ENCODE measurements at regions of chr10 and their contacts with region 1.

Region 1: DNA sequence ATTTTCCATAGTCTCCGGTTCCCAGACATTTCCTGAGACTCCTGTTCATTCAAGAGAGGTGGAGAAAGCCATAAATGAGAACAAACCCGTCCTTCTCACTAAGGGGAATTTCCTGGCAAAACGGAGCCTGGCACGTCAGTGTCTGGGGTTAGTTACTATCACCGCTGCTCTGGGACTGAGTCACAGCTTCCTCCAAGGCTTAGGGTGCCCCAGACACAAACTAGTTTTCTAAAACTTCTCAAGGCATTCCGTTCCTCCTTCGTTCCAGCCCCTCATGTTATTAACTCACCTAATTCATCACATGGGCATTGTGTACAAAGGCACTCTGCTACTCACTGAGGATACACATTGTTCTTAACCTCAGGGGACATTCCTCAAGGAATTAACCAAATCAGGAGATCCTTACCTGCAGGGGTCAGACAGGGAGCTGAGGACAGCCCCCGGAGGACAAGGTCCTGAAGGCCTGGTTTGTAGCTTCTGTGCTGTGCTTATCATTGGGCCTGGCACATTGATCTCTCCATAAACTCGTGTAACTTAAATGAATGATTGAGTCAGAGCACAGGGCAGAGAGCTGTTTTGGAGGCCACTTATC is 103.0 kb upstream of the KLF6 start:
- DNase-seq: peak; percentile 70 to 94 (median 74)
- H3K4me3 ChIP-seq: no peak overlapping the region
- H3K4me3 Mint-ChIP-seq: peak overlapping the region; percentile 62 to 82 (median 70)
- H3K27ac ChIP-seq: peak overlapping the region; percentile 77
- H3K27ac Mint-ChIP-seq: peak overlapping the region; percentile 91 to 99 (median 98)
- H3K4me1 ChIP-seq: peaks cover 53% of the 10 kb centered on the region
- H3K4me1 Mint-ChIP-seq: peaks cover 23 to 68% (median 49%) of the 10 kb centered on the region in 4 donors
- H3K27me3 ChIP-seq: no peaks in the 10 kb centered on the region
- H3K27me3 Mint-ChIP-seq: no peaks in the 10 kb centered on the region

Region 2: DNA sequence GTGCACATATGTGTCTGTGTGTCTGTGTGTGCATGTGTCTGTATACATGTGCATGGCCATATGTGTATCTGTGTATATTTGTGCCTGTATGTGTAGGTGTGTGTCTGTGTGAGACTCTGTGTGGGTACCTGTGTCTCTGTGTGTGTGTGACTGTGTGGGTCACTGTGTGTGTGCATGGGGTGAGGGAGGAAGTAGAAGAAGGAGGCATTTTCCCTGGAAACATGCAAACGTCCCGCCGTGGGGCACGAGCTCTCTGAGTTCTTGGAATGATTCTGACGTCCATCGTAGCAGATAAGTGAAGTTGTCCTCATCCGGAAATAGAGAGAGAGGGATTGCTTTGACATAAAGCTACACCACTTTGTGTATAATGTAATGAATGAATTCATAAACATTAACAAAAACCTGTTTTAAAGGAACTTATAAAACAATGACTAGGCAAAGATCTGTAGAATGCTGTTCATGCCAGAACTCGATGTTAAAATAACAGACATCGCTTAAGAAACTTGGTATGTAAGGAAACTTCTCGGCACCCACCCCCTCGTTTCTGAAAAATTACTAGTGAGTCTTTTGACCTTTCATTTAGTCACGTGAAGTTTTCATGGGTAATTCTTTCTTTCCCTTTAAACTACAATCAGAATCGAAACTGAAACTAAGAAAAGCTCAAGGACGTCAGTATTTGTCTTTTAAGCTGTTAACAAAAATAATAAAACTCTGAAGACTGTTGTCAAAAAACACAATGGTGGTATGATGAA is 59.4 kb before region 1 on chr10:
- CTCF ChIA-PET with region 1: no interaction called
- POLR2A ChIA-PET with region 1: interaction called, 13 read pairs
- intact Hi-C with region 1: no loop called
- DNase-seq: peak; percentile 53 to 70 (median 62)
- H3K4me3 ChIP-seq: peak overlapping the region; percentile 32 to 55
- H3K4me3 Mint-ChIP-seq: peak overlapping the region; percentile 85 to 91 (median 88)
- H3K27ac ChIP-seq: peak overlapping the region; percentile 78
- H3K27ac Mint-ChIP-seq: peak overlapping the region; percentile 84 to 98 (median 95)
- H3K4me1 ChIP-seq: peaks cover 21% of the 10 kb centered on the region
- H3K4me1 Mint-ChIP-seq: peaks cover 21 to 43% (median 33%) of the 10 kb centered on the region in 4 donors
- H3K27me3 ChIP-seq: no peaks in the 10 kb centered on the region
- H3K27me3 Mint-ChIP-seq: no peaks in the 10 kb centered on the region

Region 3: DNA sequence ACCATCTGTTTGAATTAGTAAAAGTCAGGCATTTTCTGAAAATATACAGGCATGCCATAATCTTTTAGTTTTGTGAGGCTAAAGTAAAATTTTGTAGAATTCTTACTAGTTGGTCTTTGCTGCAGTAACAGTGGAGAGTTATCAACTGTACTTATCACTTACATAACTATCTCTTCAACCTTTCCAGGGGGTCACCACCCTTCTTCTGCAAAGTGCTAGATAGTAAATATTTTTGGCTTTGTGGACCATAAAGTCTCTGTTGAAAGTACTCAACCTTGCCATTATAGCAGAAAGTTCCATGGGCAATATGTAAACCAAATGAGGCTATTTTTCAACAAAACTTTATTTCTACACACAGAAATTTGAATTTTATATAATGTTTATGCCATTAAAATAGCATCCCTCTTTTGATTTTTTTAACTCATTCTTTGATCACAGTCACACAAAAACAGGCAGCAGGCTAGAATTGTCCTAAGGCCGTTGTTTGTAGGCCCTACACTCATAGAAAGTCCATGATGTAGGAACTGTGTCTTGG is 43.4 kb before region 1 on chr10:
- CTCF ChIA-PET with region 1: no interaction called
- POLR2A ChIA-PET with region 1: no interaction called
- intact Hi-C with region 1: no loop called
- DNase-seq: no peak
- H3K4me3 ChIP-seq: no peak overlapping the region
- H3K4me3 Mint-ChIP-seq: no peak overlapping the region
- H3K27ac ChIP-seq: no peak overlapping the region
- H3K27ac Mint-ChIP-seq: no peak overlapping the region
- H3K4me1 ChIP-seq: no peaks in the 10 kb centered on the region
- H3K4me1 Mint-ChIP-seq: peaks cover 0 to 3% (median under 1%) of the 10 kb centered on the region in 4 donors
- H3K27me3 ChIP-seq: no peaks in the 10 kb centered on the region
- H3K27me3 Mint-ChIP-seq: no peaks in the 10 kb centered on the region

Region 4: GRCh38 chr10:3902054-3902808 is 14.2 kb after region 1 on chr10:
- CTCF ChIA-PET with region 1: interaction called, 4 read pairs
- POLR2A ChIA-PET with region 1: interaction called, 7 read pairs
- intact Hi-C with region 1: loop called (anchors 2 kb)
- DNase-seq: peak; percentile 47 to 81 (median 63)
- H3K4me3 ChIP-seq: no peak overlapping the region
- H3K4me3 Mint-ChIP-seq: peak overlapping the region in 6 of 8 donors; percentile 25 to 72 (median 48)
- H3K27ac ChIP-seq: peak overlapping the region; percentile 42
- H3K27ac Mint-ChIP-seq: peak overlapping the region; percentile 38 to 98 (median 89)
- H3K4me1 ChIP-seq: peaks cover 22% of the 10 kb centered on the region
- H3K4me1 Mint-ChIP-seq: peaks cover 10 to 30% (median 22%) of the 10 kb centered on the region in 4 donors
- H3K27me3 ChIP-seq: no peaks in the 10 kb centered on the region
- H3K27me3 Mint-ChIP-seq: no peaks in the 10 kb centered on the region

Region 5: GRCh38 chr10:4028027-4028471 is 140.1 kb after region 1 on chr10:
- CTCF ChIA-PET with region 1: no interaction called
- POLR2A ChIA-PET with region 1: no interaction called
- intact Hi-C with region 1: no loop called
- DNase-seq: no peak
- H3K4me3 ChIP-seq: no peak overlapping the region
- H3K4me3 Mint-ChIP-seq: no peak overlapping the region
- H3K27ac ChIP-seq: no peak overlapping the region
- H3K27ac Mint-ChIP-seq: no peak overlapping the region
- H3K4me1 ChIP-seq: peaks cover 1% of the 10 kb centered on the region
- H3K4me1 Mint-ChIP-seq: peaks cover 4 to 16% (median 6%) of the 10 kb centered on the region in 4 donors
- H3K27me3 ChIP-seq: no peaks in the 10 kb centered on the region
- H3K27me3 Mint-ChIP-seq: no peaks in the 10 kb centered on the region